ENCODE measurements at regions of chr10 and their contacts with region 1.

Region 1: GRCh38 chr10:12902135-12902572 is 99.4 kb downstream of the CCDC3 start:
- DNase-seq: peak; percentile 61 to 63
- ATAC-seq: peak; percentile 56 to 76; a peak in 3 of 6 replicates
- H3K4me3 ChIP-seq: no peak overlapping the region
- H3K27ac ChIP-seq: no peak overlapping the region
- H3K4me1 ChIP-seq: no peaks in the 10 kb centered on the region
- CTCF ChIP-seq: peak; percentile 80
- EP300 ChIP-seq: no peak
- POLR2A ChIP-seq: no peak
- RAD21 ChIP-seq: peak; percentile 81 to 82

Region 2: GRCh38 chr10:12750525-12751201 is 151.5 kb before region 1 on chr10:
- CTCF ChIA-PET with region 1: no interaction called
- POLR2A ChIA-PET with region 1: no interaction called
- DNase-seq: no peak
- ATAC-seq: no peak
- H3K4me3 ChIP-seq: no peak overlapping the region
- H3K27ac ChIP-seq: no peak overlapping the region
- H3K4me1 ChIP-seq: no peaks in the 10 kb centered on the region
- CTCF ChIP-seq: no peak
- EP300 ChIP-seq: no peak
- POLR2A ChIP-seq: no peak
- RAD21 ChIP-seq: no peak

Region 3: DNA sequence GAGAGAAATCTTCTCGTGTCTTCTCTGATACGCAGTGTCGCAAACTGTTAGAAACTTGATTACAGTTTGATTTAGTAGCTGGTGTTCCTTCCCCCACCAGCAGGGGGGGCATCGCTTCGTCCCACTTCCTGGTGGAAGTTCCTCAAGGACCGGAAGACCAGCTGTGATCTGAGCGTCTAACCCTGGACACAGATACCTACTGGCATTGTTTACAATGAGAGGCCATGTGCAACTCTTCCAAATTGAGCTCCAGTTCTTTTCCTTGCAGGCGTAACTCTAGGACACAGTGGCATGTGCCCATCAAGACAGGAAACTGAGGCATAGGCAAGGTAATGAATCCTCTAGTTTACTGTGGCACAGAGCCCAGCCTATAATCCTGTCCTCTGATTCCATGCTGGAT is 119.6 kb before region 1 on chr10:
- CTCF ChIA-PET with region 1: interaction called, 10 read pairs
- POLR2A ChIA-PET with region 1: no interaction called
- DNase-seq: peak; percentile 61 to 66
- ATAC-seq: peak; percentile 55 to 76; a peak in 4 of 6 replicates
- H3K4me3 ChIP-seq: no peak overlapping the region
- H3K27ac ChIP-seq: no peak overlapping the region
- H3K4me1 ChIP-seq: no peaks in the 10 kb centered on the region
- CTCF ChIP-seq: peak; percentile 60
- EP300 ChIP-seq: no peak
- POLR2A ChIP-seq: no peak
- RAD21 ChIP-seq: peak; percentile 39 to 47; a peak in 4 of 5 replicates

Region 4: DNA sequence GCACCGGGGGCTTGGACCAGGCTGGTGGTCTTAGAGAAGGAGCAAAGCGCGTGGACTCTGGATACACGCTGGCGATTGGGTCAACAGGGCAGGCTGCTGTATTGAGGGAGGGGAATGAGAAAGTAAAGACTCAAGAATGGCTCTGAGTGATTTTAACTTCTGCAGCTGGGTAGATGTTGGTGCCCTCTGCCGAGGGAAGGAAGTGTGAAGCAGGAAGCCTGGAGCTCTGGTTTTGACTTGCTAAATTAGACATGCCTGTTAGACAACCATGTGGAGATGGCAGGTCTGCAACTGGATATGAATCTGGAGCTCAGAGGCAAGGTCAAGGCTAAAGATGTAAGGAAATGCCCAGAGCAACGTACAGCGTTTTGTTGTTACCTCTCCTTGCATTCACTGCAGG is 17.8 kb before region 1 on chr10:
- CTCF ChIA-PET with region 1: interaction called, 14 read pairs
- POLR2A ChIA-PET with region 1: no interaction called
- DNase-seq: no peak
- ATAC-seq: no peak
- H3K4me3 ChIP-seq: no peak overlapping the region
- H3K27ac ChIP-seq: no peak overlapping the region
- H3K4me1 ChIP-seq: no peaks in the 10 kb centered on the region
- CTCF ChIP-seq: no peak
- EP300 ChIP-seq: no peak
- POLR2A ChIP-seq: no peak
- RAD21 ChIP-seq: no peak

Region 5: DNA sequence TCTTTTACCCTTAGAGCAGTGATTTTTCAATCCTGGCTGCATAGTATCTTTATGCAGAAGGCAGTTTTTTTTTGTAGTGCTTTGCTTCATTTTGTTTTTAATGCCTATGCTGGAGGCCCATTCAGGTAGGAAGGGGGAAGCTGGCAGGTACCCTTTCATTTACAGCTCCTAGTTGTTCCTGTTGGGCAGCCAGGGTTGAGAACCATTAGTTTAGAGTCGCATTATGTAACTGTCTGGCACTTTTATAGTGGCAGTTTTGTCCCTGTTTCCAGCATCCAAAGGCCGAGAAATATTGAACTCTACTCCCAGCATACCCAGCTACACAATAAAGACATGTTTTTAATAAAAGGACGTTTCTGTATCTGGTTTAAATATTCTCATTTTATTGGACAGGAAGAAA is 11.2 kb before region 1 on chr10:
- CTCF ChIA-PET with region 1: interaction called, 17 read pairs
- POLR2A ChIA-PET with region 1: no interaction called
- DNase-seq: no peak
- ATAC-seq: no peak
- H3K4me3 ChIP-seq: no peak overlapping the region
- H3K27ac ChIP-seq: no peak overlapping the region
- H3K4me1 ChIP-seq: no peaks in the 10 kb centered on the region
- CTCF ChIP-seq: no peak
- EP300 ChIP-seq: no peak
- POLR2A ChIP-seq: no peak
- RAD21 ChIP-seq: no peak

Region 6: DNA sequence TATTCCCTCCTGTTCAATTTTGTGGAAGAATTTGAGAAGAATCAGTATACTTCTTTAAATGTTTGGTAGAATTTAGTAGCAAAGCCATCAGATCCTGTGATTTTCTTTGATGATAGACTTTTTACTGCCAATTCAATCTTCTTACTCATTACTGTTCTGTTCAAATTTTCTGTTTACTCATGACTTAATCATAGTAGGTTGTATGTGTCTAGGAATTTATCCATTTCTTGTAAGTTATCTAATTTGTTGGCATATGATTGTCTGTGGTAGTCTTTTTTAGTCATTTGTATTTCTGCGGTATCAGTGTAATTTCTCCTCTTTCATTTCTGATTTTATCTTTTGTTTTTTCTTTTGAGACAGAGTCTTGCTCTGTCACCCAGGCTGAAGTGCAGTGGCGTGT is 12.0 kb after region 1 on chr10:
- CTCF ChIA-PET with region 1: interaction called, 14 read pairs
- POLR2A ChIA-PET with region 1: no interaction called
- DNase-seq: no peak
- ATAC-seq: no peak
- H3K4me3 ChIP-seq: no peak overlapping the region
- H3K27ac ChIP-seq: no peak overlapping the region
- H3K4me1 ChIP-seq: 0 out of 3 replicates have a peak, but pooled peaks cover 3% of the 10 kb centered on the region
- CTCF ChIP-seq: no peak
- EP300 ChIP-seq: no peak
- POLR2A ChIP-seq: no peak
- RAD21 ChIP-seq: no peak

Region 7: DNA sequence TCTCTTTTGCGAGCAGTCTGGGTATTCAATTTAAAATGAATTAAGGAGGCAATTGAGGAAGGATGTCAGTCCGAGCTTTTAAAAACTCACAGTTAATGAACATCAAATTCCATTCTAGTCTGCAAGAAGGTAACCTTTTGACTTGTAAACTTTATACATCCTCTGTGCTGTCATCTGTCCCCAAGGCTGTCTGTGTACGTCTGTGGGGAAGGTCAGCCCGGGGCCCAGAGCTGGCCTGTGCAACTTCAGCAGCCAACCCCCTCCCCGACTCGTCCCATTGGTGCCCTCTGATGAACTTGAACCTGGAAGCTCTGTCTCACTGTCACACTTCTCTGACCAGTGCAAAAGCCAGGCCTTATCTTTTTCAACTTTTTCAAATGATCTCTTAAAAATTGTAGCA is 19.0 kb after region 1 on chr10:
- CTCF ChIA-PET with region 1: interaction called, 14 read pairs
- POLR2A ChIA-PET with region 1: no interaction called
- DNase-seq: no peak
- ATAC-seq: no peak
- H3K4me3 ChIP-seq: no peak overlapping the region
- H3K27ac ChIP-seq: no peak overlapping the region
- H3K4me1 ChIP-seq: no peaks in the 10 kb centered on the region
- CTCF ChIP-seq: no peak
- EP300 ChIP-seq: no peak
- POLR2A ChIP-seq: no peak
- RAD21 ChIP-seq: no peak